Dorsolateral prefrontal cortex (tissue), 120 donors: ENCODE measurements at regions of chr20 and their contacts with region 1.

Region 1: DNA sequence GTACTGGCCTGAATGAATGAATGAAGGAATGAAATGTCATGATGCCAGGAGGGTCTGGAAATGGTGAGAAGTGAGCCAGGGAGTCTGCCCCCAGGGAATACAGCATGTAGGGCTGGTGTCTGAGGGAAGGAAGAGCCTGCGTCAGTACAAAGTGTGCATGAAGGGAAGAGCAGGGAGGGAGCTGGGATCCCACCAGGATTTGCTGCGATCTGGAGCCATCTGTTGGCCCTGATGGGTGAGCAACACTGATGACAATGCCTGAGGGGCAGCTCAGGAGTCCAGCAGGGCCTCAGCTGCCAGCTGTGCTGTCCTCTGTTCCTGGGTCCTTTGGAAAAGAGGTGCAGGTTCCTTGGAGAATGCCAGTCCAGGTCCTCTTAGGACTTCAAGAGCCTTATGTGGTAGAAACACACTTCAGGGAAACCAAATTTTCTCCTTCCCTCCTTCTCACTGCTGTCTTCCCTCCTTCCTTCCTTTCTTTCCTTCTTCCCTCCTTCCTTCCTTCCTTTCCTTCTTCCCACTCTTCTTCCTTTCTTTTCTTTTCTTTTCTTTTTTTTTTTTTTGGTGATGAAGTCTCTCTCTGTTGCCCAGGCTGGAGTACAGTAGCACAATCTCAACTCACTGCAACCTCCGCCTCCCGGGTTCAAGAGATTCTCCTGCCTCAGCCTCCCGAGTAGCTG is 11.5 kb downstream of the BPI start:
- DNase-seq: peak in 2 of 10 donors; percentile 47 to 61
- H3K4me3 ChIP-seq: no peak overlapping the region
- H3K27ac ChIP-seq: no peak overlapping the region
- H3K27me3 ChIP-seq: no peaks in the 10 kb centered on the region
- CTCF ChIP-seq: peak in 46 of 56 donors; percentile 13 to 71 (median 45)

Region 2: DNA sequence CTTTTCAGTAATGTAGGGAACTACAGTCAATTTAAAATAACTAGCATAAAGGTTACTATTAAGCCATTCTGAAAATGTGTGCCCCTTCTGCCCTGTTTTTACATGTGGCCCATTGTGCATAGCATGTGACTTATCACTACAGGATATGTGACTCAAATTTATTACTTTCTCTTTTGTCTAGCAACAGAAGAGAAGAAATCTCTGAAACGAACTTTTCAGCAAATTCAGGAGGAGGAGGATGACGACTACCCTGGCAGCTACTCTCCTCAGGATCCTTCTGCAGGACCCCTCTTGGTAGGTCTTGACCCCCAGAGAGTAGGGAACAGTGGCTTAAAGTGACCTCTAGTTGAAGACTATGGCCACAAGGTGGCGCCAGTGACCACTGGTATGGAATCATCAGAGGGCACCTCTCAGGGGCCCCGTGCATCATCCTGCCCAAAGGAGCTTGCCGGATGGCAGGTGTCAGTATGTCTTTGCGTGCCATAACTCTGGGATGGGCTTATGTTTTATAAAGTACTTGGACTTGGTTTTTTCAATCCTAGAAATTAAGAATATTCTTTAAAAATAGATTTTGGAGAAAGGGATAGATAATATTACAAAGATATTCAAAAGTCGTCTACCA is 258.0 kb before region 1 on chr20:
- intact Hi-C with region 1: loop called in 1 of 2 experiments (anchors 5 kb)
- DNase-seq: peak; percentile 69 to 90 (median 81)
- H3K4me3 ChIP-seq: no peak overlapping the region
- H3K27ac ChIP-seq: peak overlapping the region in 1 of 59 donors; percentile 29
- H3K27me3 ChIP-seq: no peaks in the 10 kb centered on the region
- CTCF ChIP-seq: peak; percentile 79 to 99 (median 93)

Region 3: GRCh38 chr20:38073307-38074071 is 241.9 kb before region 1 on chr20:
- intact Hi-C with region 1: loop called in 1 of 2 experiments (anchors 10 kb)
- DNase-seq: peak in 1 of 10 donors; percentile 11
- H3K4me3 ChIP-seq: no peak overlapping the region
- H3K27ac ChIP-seq: peak overlapping the region in 43 of 59 donors; percentile 2 to 76 (median 47)
- H3K27me3 ChIP-seq: no peaks in the 10 kb centered on the region
- CTCF ChIP-seq: peak; percentile 58 to 85 (median 76)

Region 4: DNA sequence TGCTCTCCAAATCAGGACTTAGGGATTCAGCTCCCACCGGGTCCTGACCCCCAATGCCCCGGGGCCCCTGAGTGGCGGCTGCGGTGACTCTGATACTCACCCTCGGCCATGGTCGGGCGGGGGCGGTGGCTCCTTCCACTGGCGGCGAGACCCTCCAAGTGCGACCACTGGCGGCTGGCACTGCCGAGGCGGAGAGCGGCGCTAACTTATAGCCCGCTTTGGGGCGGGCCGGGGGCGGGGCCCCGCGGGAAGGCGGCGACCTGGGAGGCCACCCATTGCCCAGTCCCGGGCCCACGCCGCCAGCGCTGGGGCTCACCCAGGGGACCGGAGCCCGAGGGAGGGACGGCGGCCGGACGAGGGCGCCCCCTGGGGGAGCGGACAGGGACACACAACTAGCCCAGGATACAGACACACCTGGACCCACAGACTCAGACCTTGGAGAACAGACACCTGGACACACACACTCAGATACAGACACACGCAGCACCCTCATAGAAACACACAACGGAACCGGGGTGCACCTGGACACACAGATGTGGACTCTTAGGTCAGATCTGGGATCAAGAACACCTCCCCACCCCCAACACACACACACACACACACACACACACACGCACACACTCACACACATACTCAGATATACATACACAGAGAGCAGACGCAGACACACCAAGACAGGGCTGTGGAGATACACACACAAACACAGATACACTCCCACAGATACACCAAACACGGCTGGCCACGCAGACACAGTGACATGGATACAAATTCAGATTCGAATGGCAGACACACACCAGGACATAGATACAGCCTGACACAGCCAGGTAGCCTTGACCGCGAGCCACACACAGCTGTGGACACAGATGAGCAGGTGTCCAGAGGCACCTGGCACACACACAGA is 150.1 kb before region 1 on chr20 and contains the start of gene TGM2:
- intact Hi-C with region 1: loop called in 1 of 2 experiments (anchors 5 kb)
- DNase-seq: peak in 1 of 10 donors; percentile 63
- H3K4me3 ChIP-seq: peak within 1 kb of the TSS in 58 of 59 donors; percentile 16 to 65 (median 45)
- H3K27ac ChIP-seq: peak within 1 kb of the TSS in 22 of 59 donors; percentile 1 to 76 (median 30)
- H3K27me3 ChIP-seq: peaks cover 0 to 7% (median 0%) of the 10 kb centered on the region in 45 donors
- CTCF ChIP-seq: peak; percentile 43 to 87 (median 75)
- total RNA-seq, gene TGM2: 17.7 to 220 (median 53.6) TPM

Region 5: GRCh38 chr20:38514185-38514584 is 198.8 kb after region 1 on chr20:
- intact Hi-C with region 1: no loop called
- DNase-seq: no peak
- H3K4me3 ChIP-seq: no peak overlapping the region
- H3K27ac ChIP-seq: peak overlapping the region in 1 of 59 donors; percentile 1
- H3K27me3 ChIP-seq: no peaks in the 10 kb centered on the region
- CTCF ChIP-seq: no peak